ENCODE measurements at regions of chr4 and their contacts with region 1.

Region 1: DNA sequence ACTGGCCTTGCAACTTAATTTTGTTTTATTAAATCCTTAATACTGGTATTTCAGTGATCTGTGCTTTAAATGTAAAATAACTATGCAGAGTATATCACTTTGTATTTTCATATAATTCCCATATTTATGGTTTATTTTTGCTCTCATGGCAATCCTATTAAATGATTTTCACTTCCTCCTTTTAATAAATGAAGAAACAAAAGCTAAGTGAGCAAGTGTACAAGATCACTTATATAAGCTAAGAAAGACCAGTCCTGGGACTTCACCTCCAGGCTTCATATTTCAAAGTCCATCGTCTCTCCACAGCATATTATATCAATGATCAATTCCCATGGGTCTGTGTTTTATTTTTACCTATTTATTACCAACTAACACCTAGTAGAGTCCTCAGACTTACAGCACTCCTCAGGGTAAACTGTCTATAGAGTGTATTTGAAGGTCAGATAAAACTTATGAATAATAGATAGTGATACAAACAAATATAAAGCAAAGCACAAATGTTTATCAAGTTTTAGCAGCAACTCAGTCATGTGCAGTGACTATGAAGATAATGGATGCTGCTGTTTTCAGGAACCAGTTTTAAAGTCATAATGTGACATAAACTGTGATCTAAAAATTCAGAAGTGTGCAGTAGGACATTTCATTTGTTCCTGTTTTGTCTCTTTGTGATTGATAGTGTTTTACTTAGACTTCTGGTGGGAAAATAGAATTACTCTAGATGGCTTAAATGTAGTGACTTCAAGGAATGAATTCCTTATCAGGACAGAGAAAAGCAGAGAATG is 56.8 kb downstream of the ARHGAP24 start:
- DNase-seq: no peak
- ATAC-seq: peak; percentile 52
- H3K4me3 Mint-ChIP-seq: peak overlapping the region; percentile 5
- H3K27ac Mint-ChIP-seq: peak overlapping the region; percentile 3
- H3K4me1 Mint-ChIP-seq: peaks cover 49% of the 10 kb centered on the region
- H3K27me3 Mint-ChIP-seq: no peaks in the 10 kb centered on the region
- CTCF ChIP-seq: no peak

Region 2: GRCh38 chr4:85543832-85544231 is 12.1 kb after region 1 on chr4:
- CTCF ChIA-PET with region 1: no interaction called
- POLR2A ChIA-PET with region 1: interaction called, 3 read pairs
- intact Hi-C with region 1: loop called (anchors 2 kb)
- DNase-seq: no peak
- ATAC-seq: no peak
- H3K4me3 Mint-ChIP-seq: no peak overlapping the region
- H3K27ac Mint-ChIP-seq: no peak overlapping the region
- H3K4me1 Mint-ChIP-seq: peaks cover 36% of the 10 kb centered on the region
- H3K27me3 Mint-ChIP-seq: no peaks in the 10 kb centered on the region
- CTCF ChIP-seq: no peak

Measured in activated B cell treated with CpG ODN at 0.5 μM for 24 hours (primary cell).